ENCODE measurements at regions of chr20 and their contacts with region 1.

Region 1: DNA sequence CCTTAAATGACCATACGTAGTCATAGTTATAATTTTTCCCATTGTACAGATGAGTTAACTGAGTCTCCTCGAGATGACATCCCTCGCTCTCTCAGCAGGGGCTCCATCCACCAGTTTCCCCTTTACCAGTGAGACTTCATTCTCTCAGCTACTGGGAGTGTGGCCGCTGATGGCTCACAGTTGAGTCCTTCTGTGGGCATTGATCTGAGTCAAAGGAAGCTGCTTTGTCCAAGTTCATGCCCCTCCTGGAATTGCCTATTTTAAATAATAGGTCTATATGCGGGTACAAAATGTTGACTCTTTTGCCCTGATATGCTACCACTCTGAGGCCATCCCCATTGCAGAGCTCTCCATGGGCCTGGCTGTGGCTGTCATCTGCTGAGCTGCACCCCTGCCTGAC is 14.8 kb upstream of the CST1 start:
- DNase-seq: no peak
- H3K4me3 ChIP-seq: no peak overlapping the region
- H3K27ac ChIP-seq: no peak overlapping the region
- H3K4me1 ChIP-seq: no peaks in the 10 kb centered on the region
- H3K27me3 ChIP-seq: no peaks in the 10 kb centered on the region
- CTCF ChIP-seq: no peak
- POLR2A ChIP-seq: no peak

Region 2: GRCh38 chr20:23257848-23258746 is 507.5 kb before region 1 on chr20:
- intact Hi-C with region 1: no loop called
- DNase-seq: peak in 6 of 7 donors; percentile 34 to 70 (median 50)
- H3K4me3 ChIP-seq: no peak overlapping the region
- H3K27ac ChIP-seq: peak overlapping the region in 4 of 5 donors; percentile 33 to 85 (median 60)
- H3K4me1 ChIP-seq: peaks cover 0 to 18% of the 10 kb centered on the region in 2 donors
- H3K27me3 ChIP-seq: no peaks in the 10 kb centered on the region
- CTCF ChIP-seq: no peak
- POLR2A ChIP-seq: no peak

Region 3: GRCh38 chr20:23826541-23827021 is 61.0 kb after region 1 on chr20 and contains the start of gene CST2:
- intact Hi-C with region 1: loop called in 1 of 2 experiments (anchors 10 kb)
- DNase-seq: no peak
- H3K4me3 ChIP-seq: no peak within 1 kb of the TSS
- H3K27ac ChIP-seq: no peak within 1 kb of the TSS
- H3K4me1 ChIP-seq: no peaks in the 10 kb centered on the region
- H3K27me3 ChIP-seq: no peaks in the 10 kb centered on the region
- CTCF ChIP-seq: no peak
- POLR2A ChIP-seq: no peak
- total RNA-seq, gene CST2: 1.3 to 94.3 (median 20.8) TPM in 6 of 9 donors, not detected in the others

Region 4: GRCh38 chr20:23841693-23842092 is 76.1 kb after region 1 on chr20:
- intact Hi-C with region 1: no loop called
- DNase-seq: no peak
- H3K4me3 ChIP-seq: no peak overlapping the region
- H3K27ac ChIP-seq: no peak overlapping the region
- H3K4me1 ChIP-seq: no peaks in the 10 kb centered on the region
- H3K27me3 ChIP-seq: no peaks in the 10 kb centered on the region
- CTCF ChIP-seq: no peak
- POLR2A ChIP-seq: no peak